GM18951 (cell line): ENCODE measurements at regions of chr3 and their contacts with region 1.

Region 1: DNA sequence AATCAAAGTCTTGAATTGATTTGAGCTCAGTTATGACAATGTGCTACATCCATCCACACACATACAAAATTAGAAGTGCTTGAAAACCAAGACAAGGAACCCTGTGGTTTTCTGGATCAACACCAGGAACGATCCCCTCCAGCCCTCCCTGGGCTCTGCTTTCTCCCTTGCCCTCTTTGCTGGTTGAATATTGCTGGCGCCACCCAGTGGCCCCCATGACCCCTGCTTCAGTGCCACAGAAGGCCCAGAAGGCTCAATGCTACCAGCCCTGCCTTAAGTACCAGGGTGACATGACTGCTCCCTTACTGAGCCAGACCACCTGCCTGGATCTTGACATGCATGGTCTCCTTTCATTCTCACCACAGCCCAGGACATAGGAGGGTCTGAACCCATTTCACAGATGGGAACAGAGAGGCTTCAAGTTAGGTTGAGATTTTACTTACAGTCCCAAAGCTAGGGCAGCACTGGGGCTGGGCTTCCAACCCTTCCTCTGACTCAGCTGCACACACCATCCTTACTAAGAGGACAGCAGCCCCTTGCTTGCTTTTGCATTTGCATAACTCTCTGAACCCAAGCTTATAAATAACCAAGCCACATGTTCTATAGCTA is 15.0 kb downstream of the IL12A start:
- POLR2A ChIP-seq: no peak

Region 2: DNA sequence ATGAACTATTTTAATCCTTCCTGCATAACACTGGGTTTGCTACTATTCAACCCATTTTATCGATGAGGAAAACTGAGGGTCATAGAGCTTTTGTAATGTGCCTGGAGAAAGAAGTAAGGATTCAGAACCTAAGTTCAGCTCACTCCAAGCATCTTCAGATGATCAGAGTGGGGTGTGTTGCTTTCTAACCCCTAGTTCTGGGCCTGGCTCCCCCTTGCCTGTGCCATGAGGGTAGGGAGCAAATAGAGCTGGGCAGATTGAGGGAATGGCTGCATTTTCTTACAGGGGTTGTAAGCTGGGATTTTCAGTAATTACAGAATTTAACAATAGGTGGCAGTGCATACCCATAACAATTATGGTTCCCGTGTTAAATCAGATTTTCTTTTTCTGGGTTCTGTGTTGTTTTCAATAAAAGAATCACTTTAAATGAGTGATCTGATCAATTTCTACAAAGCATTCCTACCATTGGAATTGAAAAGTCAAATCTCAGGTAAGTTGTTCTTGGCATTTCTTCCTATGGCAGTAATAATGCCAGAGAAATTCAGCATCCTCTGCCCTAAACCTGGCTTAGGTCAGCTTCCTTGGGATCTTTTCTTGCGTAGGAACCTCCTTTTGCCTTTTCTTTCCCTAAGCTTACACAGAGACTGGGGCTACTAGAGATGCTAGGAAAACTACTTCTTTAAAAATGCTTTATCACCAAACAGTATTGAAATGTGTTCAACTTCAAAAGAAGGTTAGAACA is 118.8 kb before region 1 on chr3:
- in situ Hi-C with region 1: loop called (anchors 5 kb)
- POLR2A ChIP-seq: no peak

Region 3: GRCh38 chr3:161999846-162000245 is 1996.2 kb after region 1 on chr3:
- in situ Hi-C with region 1: no loop called
- POLR2A ChIP-seq: no peak